ENCODE measurements at regions of chr12 and their contacts with region 1.

Region 1: DNA sequence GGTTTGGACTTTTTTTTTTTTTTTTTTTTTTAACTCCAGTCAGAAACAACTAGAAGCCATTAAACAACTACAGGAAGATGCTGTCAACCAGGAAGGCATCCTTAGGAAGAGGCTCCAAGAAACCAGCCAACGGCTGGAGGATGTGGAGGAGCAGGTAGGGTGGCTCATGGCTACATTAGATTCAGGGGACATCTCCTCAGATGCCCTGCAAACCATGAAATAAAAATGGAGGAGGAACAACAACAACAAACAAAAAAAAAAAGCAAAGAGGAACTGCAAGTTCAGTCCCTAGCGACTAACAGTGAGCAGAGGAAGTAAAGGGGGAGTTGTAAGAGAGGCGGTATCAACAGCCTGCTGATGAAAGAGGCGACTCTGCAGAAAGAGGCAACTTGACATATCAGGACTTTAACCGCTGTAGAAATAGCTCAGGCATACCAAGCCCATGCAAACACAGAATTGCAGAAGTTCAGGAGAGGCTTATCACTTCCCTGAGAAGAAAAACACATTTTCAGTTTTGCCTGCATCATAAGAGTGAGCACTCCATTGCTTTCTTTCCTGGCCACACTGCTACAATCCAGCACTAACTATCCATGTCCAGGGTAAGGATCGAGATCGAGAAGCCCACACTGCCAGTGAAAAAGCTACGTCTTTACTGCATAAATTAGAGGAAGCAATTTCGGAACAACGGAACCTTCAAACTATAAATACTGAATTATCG is 103.5 kb upstream of the BCAT1 start:
- DNase-seq: peak; percentile 70
- ATAC-seq: peak; percentile 81
- H3K4me3 Mint-ChIP-seq: peak overlapping the region; percentile 98
- H3K27ac Mint-ChIP-seq: peak overlapping the region; percentile 93
- H3K4me1 Mint-ChIP-seq: peaks cover 37% of the 10 kb centered on the region
- H3K27me3 Mint-ChIP-seq: no peaks in the 10 kb centered on the region

Region 2: DNA sequence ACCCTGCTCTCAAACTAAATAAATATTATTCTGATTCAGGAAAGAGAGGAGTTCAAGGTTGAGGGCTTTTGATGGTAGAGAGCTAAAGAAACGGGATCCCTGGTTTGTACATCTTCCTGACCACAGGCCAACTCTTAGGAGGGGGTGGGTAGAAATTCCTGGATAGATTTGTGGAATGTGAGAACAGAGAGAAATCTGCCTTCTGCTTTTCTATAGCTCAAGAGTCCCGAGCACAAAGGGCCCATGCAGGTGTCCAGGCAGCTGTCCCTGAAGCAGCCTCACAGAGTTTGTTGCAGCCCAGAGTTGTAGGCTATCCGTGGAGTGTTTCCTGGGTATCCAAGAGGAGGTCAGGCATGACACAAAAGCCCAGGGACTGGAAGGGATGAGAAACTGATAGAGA is 302.1 kb before region 1 on chr12:
- CTCF ChIA-PET with region 1: no interaction called
- POLR2A ChIA-PET with region 1: no interaction called
- DNase-seq: no peak
- ATAC-seq: no peak
- H3K4me3 Mint-ChIP-seq: no peak overlapping the region
- H3K27ac Mint-ChIP-seq: no peak overlapping the region
- H3K4me1 Mint-ChIP-seq: no peaks in the 10 kb centered on the region
- H3K27me3 Mint-ChIP-seq: peaks cover 5% of the 10 kb centered on the region

Region 3: DNA sequence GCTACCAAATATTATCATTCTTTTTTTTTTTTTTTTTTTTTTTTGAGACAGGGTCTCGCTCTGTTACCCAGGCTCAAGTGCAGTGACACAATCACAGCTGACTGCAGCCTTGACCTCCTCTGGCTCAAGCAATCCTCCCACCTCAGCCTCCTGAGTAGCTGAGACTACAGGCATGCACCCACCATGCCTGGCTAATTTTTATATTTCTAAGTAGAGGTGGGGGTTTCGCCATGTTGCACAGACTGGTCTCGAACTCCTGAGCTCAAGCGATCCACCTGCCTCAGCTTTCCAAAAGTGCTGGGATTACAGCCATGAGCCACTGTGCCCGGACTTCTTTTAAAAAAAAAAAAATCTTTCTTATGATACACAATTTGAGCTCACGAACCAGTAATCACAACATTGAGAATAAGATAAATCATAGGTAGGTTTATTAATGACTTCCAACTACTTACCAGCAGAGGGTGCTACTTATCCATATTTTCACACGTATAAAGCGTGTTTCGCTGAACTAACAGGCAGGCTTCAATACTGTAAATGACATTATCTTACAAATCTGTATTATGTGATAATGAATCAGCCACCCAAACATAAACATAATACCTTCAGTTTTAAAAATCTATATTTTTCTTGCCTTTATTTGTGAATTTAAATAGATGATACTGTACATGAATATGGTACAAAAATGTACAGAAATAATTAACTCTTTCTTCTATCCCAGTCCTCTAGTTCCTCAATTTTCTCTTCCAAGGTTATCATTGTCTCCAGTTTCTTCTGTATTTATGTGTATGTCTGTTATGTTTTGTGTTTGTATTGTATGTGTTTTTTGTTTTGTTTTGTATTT is 60.9 kb before region 1 on chr12:
- CTCF ChIA-PET with region 1: interaction called, 28 read pairs
- POLR2A ChIA-PET with region 1: interaction called, 3 read pairs
- DNase-seq: peak; percentile 35
- ATAC-seq: peak; percentile 78
- H3K4me3 Mint-ChIP-seq: no peak overlapping the region
- H3K27ac Mint-ChIP-seq: no peak overlapping the region
- H3K4me1 Mint-ChIP-seq: no peaks in the 10 kb centered on the region
- H3K27me3 Mint-ChIP-seq: peaks cover 8% of the 10 kb centered on the region

Region 4: GRCh38 chr12:24997970-24998582 is 54.3 kb before region 1 on chr12:
- CTCF ChIA-PET with region 1: interaction called, 28 read pairs
- POLR2A ChIA-PET with region 1: interaction called, 3 read pairs
- DNase-seq: no peak
- ATAC-seq: no peak
- H3K4me3 Mint-ChIP-seq: no peak overlapping the region
- H3K27ac Mint-ChIP-seq: no peak overlapping the region
- H3K4me1 Mint-ChIP-seq: peaks cover 4% of the 10 kb centered on the region
- H3K27me3 Mint-ChIP-seq: peaks cover 7% of the 10 kb centered on the region

Region 5: DNA sequence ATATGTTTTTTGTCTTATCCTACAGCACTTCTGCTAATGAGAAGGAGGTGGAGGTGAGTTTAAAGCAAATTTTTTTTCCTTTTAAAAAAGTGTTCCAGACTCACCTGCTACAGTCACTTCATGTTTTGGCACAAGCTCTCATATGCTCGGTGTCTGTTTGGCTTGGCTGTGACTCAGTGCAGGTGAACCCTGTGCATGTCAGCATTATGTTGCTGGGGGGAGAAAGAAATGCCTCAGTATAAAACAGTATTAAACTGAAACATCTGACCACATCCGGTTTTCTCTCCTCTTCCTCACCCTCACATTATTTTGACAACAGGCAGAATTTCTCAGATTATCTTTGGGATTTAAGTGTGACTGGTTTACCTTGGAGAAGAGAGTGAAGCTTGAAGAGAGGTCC is 37.4 kb after region 1 on chr12:
- CTCF ChIA-PET with region 1: no interaction called
- POLR2A ChIA-PET with region 1: interaction called, 11 read pairs
- DNase-seq: no peak
- ATAC-seq: no peak
- H3K4me3 Mint-ChIP-seq: no peak overlapping the region
- H3K27ac Mint-ChIP-seq: peak overlapping the region; percentile 16
- H3K4me1 Mint-ChIP-seq: peaks cover 11% of the 10 kb centered on the region
- H3K27me3 Mint-ChIP-seq: no peaks in the 10 kb centered on the region

Measured in activated CD8-positive, alpha-beta T cell treated with anti-CD3 and anti-CD28 coated beads, Interleukin-2, amount 10 ng/mL, durations not matched to agents 7 days and 5 days (primary cell).